Right ventricle myocardium inferior (tissue), 1 donor: ENCODE measurements at regions of chr6 and their contacts with region 1.

Region 1: DNA sequence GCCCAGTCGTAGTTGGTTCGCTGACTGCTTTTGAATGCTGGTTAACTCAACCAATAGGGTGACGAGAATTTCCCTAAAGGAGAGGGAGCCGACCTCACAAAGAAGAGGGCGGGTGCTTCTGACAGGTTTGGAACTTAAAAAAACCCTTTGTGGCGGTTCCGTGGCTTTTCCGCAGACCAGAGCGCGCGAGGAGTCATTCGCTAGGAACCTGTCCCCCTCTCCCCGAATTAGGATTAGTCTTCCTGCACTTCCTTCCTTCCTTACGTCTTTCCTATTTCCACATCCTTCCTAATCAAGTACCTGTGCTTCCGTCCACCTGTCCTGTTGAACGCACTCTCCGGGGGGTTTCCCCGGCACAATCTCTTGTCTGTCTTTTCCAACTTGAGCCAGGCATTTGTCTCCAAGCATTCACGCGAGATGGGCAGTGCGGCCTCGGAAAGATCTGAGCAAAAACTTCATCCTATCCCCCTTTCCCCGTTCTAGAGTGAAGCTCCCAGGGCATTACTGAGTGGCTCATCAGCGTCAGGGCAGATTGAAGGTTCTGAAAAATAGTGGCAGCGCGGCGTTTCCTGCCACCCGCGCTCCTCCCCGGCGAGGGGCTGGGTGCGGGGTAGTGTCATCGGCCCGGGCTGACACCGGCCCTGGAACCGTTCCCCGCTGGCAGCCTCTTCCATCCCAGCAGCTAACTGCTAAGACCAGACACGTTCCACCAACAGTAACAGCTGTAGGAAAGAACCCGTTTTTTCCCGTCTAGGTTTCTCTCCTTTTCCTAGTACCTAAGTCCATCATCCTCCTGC is 1.5 kb upstream of the STXBP5 start:
- DNase-seq: peak; percentile 79
- ATAC-seq: peak; percentile 95

Region 2: DNA sequence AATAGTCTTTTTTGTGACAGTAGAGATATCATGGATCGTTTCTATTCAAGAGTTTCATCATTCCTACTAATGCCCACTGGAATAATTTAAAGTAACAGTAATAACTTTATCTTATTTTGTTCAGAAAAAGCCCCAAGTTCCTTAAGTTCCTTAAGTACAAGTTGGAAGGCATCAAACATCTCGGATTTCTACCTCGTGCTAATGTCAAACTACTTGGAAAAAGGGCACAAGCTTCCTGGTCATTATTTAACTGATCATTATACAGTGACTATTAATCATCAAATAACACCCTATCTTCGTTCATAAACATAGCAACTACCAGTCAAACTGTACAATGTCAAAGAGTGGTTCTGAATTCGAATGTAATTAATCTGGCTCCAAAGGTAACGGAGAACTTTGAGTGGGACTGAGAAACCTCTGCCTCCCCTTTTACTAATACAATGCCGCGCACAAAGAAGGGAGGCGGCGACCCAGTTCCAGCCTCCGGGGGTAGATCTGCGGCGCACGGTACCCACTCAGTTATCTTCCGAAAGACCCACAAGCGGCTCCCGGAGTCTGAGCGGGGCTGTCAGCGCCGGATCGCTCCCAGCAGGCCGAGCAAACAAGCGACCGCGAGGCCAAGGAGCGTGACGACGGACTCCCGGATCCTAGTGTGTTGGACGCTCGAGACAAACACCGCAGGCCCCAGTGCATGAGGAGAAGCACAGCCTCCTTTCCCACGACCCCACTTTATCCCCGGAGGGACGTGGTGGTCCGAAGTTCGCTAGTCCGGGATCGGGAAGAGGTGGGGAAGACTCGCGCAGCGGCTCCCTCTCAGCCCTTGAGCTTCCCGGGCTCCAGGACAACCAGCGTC is 1239.3 kb before region 1 on chr6:
- intact Hi-C with region 1: loop called (anchors 10 kb)
- DNase-seq: peak; percentile 78
- ATAC-seq: peak; percentile 33

Region 3: GRCh38 chr6:146543211-146543939 is 659.3 kb before region 1 on chr6 and contains the start of gene RAB32:
- intact Hi-C with region 1: no loop called
- DNase-seq: peak; percentile 99
- ATAC-seq: peak; percentile 100
- total RNA-seq, gene RAB32: 7.6 TPM

Region 4: DNA sequence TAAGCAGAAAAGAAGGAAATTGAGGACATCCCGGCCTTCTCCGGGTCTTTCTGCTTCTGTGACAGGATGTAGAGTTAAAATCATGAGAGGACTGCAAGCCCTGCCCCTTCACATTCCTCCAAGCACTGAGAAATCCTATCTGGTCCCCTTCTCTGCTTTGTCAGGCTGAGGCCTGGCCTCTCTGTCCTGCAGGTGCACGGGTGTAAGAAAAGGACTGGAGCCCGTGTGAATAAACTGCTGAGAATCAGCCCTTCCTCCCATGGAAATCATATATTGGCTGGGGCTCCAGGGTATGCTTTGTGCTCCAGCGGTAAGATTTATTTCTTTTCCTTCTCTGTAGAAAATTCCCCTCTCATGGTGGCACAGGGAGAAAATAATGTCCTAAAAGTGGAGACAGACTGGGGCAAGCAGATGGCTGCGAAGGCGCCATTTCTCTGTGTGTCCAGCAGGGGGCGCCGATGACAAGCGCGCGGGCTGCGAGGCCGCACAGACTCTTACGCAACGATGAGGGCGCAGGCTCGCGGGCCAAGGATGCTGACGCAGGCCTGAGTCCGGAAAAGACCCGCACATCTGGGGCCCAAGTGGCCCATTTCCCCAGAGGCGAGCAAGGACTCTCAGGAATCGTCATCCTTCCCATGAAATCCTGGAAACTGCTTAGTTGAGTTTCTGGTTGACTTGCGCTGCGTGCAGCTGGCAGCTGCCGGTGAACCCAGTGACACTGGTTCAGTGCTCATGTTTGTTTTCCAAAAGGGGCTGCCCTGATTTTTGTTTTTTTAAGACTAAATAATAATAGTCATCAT is 345.3 kb before region 1 on chr6:
- intact Hi-C with region 1: loop called (anchors 1 kb)
- DNase-seq: peak; percentile 96
- ATAC-seq: peak; percentile 96

Region 5: GRCh38 chr6:147154454-147154853 is 48.3 kb before region 1 on chr6:
- intact Hi-C with region 1: no loop called
- DNase-seq: no peak
- ATAC-seq: no peak

Region 6: GRCh38 chr6:147285087-147285855 is 82.6 kb after region 1 on chr6:
- intact Hi-C with region 1: loop called (anchors 10 kb)
- DNase-seq: no peak
- ATAC-seq: no peak